CD4-positive, alpha-beta memory T cell (primary cell): ENCODE measurements at regions of chr1 and their contacts with region 1.

Region 1: GRCh38 chr1:24642481-24643361 is at the start of gene SRRM1:
- DNase-seq: peak; percentile 98 to 100 (median 100)
- H3K4me3 ChIP-seq: peak within 1 kb of the TSS; percentile 47 to 98
- H3K4me3 Mint-ChIP-seq: peak within 1 kb of the TSS; percentile 94 to 98 (median 96)
- H3K27ac ChIP-seq: peak within 1 kb of the TSS; percentile 99
- H3K27ac Mint-ChIP-seq: peak within 1 kb of the TSS; percentile 97 to 100 (median 100)
- H3K4me1 ChIP-seq: peaks cover 32% of the 10 kb centered on the region
- H3K4me1 Mint-ChIP-seq: peaks cover 15 to 61% (median 42%) of the 10 kb centered on the region in 4 donors
- H3K27me3 ChIP-seq: no peaks in the 10 kb centered on the region
- H3K27me3 Mint-ChIP-seq: no peaks in the 10 kb centered on the region
- total RNA-seq, gene SRRM1: 209 to 230 TPM

Region 2: GRCh38 chr1:24186993-24187805 is 455.5 kb before region 1 on chr1 and contains the start of gene IFNLR1:
- CTCF ChIA-PET with region 1: no interaction called
- POLR2A ChIA-PET with region 1: no interaction called
- intact Hi-C with region 1: loop called (anchors 5 kb)
- DNase-seq: peak; percentile 42 to 75 (median 57)
- H3K4me3 ChIP-seq: peak within 1 kb of the TSS; percentile 11 to 60
- H3K4me3 Mint-ChIP-seq: peak within 1 kb of the TSS; percentile 86 to 92 (median 90)
- H3K27ac ChIP-seq: peak within 1 kb of the TSS; percentile 50
- H3K27ac Mint-ChIP-seq: peak within 1 kb of the TSS; percentile 53 to 93 (median 83)
- H3K4me1 ChIP-seq: peaks cover 27% of the 10 kb centered on the region
- H3K4me1 Mint-ChIP-seq: peaks cover 20 to 40% (median 34%) of the 10 kb centered on the region in 4 donors
- H3K27me3 ChIP-seq: no peaks in the 10 kb centered on the region
- H3K27me3 Mint-ChIP-seq: no peaks in the 10 kb centered on the region
- total RNA-seq, gene IFNLR1: 3.0 to 4.5 TPM

Region 3: DNA sequence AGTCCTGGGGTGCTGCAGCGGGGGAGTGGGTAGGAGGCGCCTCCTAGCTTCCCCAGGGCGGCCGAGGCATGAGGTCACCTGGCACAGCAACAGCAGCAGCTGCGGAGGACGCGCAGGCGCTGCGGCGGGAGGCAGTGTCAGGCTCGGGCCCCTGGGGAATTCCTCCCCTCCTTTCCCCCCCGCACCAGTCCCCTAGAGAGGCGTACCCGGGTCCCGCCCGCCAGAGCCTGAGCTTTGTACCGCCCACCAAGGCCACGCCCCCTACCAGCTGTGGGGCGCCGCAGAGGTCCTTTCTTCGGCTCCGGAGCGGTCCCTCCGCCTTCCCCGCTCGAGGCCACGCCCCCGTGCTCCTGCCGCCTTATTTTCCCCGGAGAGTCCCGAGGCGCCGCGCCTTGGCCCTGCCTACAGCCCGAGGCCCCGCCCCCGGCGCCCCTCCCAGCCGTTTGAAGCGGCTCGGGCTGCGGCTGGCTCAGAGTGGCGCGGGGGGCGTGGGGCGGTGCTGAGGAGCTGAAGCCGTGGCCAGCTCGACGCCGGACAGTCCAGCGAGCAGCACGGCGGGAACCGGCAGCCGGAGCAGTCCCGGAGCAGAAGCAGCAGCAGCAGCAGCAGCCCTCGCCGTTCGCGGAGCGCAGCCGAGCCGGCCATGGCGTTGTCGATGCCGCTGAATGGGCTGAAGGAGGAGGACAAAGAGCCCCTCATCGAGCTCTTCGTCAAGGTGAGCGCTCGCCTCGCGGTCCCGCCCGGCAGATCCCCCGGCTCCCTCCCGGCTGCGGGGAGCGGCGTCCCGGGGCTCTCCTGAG is 102.4 kb after region 1 on chr1 and contains the start of gene CLIC4:
- CTCF ChIA-PET with region 1: no interaction called
- POLR2A ChIA-PET with region 1: interaction called, 6 read pairs
- intact Hi-C with region 1: loop called (anchors 1 kb)
- DNase-seq: peak; percentile 98 to 99 (median 99)
- H3K4me3 ChIP-seq: peak within 1 kb of the TSS in 1 of 2 donors; percentile 58
- H3K4me3 Mint-ChIP-seq: peak within 1 kb of the TSS; percentile 83 to 93 (median 87)
- H3K27ac ChIP-seq: peak within 1 kb of the TSS; percentile 55
- H3K27ac Mint-ChIP-seq: peak within 1 kb of the TSS; percentile 58 to 90 (median 86)
- H3K4me1 ChIP-seq: peaks cover 26% of the 10 kb centered on the region
- H3K4me1 Mint-ChIP-seq: peaks cover 2 to 21% (median 11%) of the 10 kb centered on the region in 4 donors
- H3K27me3 ChIP-seq: no peaks in the 10 kb centered on the region
- H3K27me3 Mint-ChIP-seq: peaks cover 6 to 9% of the 10 kb centered on the region in 2 donors
- total RNA-seq, gene CLIC4: 3.0 to 3.8 TPM